ENCODE measurements at regions of chr1 and their contacts with region 1.

Region 1: GRCh38 chr1:234610348-234611152 is 572 bp upstream of the IRF2BP2 start:
- DNase-seq: peak; percentile 92
- H3K4me3 ChIP-seq: peak overlapping the region; percentile 46 to 49 (median 48)
- H3K27ac ChIP-seq: peak overlapping the region; percentile 99
- H3K4me1 ChIP-seq: peaks cover 44% of the 10 kb centered on the region
- H3K27me3 ChIP-seq: no peaks in the 10 kb centered on the region
- CTCF ChIP-seq: peak in 1 of 2 donors; percentile 24

Region 2: GRCh38 chr1:234533975-234534876 is 76.3 kb before region 1 on chr1:
- CTCF ChIA-PET with region 1: no interaction called
- dilution Hi-C with region 1: no loop called
- in situ Hi-C with region 1: no loop called
- intact Hi-C with region 1: loop called (anchors 2 kb)
- DNase-seq: peak; percentile 69
- H3K4me3 ChIP-seq: no peak overlapping the region
- H3K27ac ChIP-seq: peak overlapping the region; percentile 98
- H3K4me1 ChIP-seq: peaks cover 70% of the 10 kb centered on the region
- H3K27me3 ChIP-seq: no peaks in the 10 kb centered on the region
- CTCF ChIP-seq: no peak

Region 3: GRCh38 chr1:234550341-234551031 is 60.1 kb before region 1 on chr1:
- CTCF ChIA-PET with region 1: no interaction called
- dilution Hi-C with region 1: no loop called
- in situ Hi-C with region 1: no loop called
- intact Hi-C with region 1: no loop called
- DNase-seq: no peak
- H3K4me3 ChIP-seq: no peak overlapping the region
- H3K27ac ChIP-seq: no peak overlapping the region
- H3K4me1 ChIP-seq: no peaks in the 10 kb centered on the region
- H3K27me3 ChIP-seq: no peaks in the 10 kb centered on the region
- CTCF ChIP-seq: no peak

Region 4: DNA sequence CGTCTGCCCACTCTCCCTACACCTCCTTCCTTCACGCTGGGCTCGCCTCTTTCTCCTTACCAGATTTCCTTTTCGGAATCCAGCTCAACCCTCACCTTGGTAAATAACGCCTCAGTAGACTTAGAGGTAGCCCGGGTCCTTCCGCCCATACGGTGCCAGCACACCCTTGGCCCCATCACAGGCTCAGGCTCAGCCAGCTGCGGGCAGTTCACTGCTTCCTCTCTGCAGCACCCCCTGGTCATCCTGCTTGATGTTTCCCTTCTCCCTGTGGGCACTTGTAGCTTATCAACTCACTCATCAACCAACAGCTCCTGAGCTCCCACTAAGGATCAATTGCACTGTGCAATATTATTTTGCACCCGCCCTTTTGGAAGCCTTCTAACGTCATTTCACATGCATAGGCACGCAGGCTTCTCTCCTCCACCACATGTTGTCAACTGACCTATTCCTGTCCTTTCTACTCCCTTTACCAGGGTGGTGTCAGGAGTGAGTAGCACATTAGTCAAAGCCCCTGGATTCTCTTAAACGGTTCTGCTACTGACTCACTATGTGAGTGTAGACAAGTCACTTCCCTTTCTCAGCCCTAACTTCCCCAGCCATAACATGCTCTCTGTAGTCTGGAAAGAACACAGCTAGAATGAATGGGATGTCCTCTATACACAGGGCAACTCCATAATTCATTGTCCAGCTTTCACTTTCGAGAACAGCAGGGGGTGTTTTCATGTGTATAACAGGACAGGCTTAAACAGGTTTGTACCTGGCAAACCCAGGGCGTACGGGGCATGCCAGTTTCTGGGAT is 46.5 kb after region 1 on chr1:
- CTCF ChIA-PET with region 1: interaction called, 3 read pairs
- dilution Hi-C with region 1: loop called (anchors 5 kb)
- in situ Hi-C with region 1: loop called (anchors 5 kb)
- intact Hi-C with region 1: loop called (anchors 1 kb)
- DNase-seq: peak; percentile 100
- H3K4me3 ChIP-seq: peak overlapping the region; percentile 51 to 70 (median 61)
- H3K27ac ChIP-seq: peak overlapping the region; percentile 99
- H3K4me1 ChIP-seq: peaks cover 47% of the 10 kb centered on the region
- H3K27me3 ChIP-seq: no peaks in the 10 kb centered on the region
- CTCF ChIP-seq: peak in 1 of 2 donors; percentile 21

Region 5: GRCh38 chr1:234722904-234723720 is 112.6 kb after region 1 on chr1:
- CTCF ChIA-PET with region 1: interaction called, 8 read pairs
- dilution Hi-C with region 1: no loop called
- in situ Hi-C with region 1: loop called (anchors 5 to 10 kb)
- intact Hi-C with region 1: loop called (anchors 1 kb)
- DNase-seq: peak; percentile 94
- H3K4me3 ChIP-seq: peak overlapping the region; percentile 12 to 29 (median 19)
- H3K27ac ChIP-seq: peak overlapping the region; percentile 93
- H3K4me1 ChIP-seq: peaks cover 67% of the 10 kb centered on the region
- H3K27me3 ChIP-seq: no peaks in the 10 kb centered on the region
- CTCF ChIP-seq: no peak

Region 6: GRCh38 chr1:234763367-234763766 is 152.8 kb after region 1 on chr1:
- CTCF ChIA-PET with region 1: no interaction called
- dilution Hi-C with region 1: no loop called
- in situ Hi-C with region 1: no loop called
- intact Hi-C with region 1: no loop called
- DNase-seq: no peak
- H3K4me3 ChIP-seq: no peak overlapping the region
- H3K27ac ChIP-seq: no peak overlapping the region
- H3K4me1 ChIP-seq: no peaks in the 10 kb centered on the region
- H3K27me3 ChIP-seq: no peaks in the 10 kb centered on the region
- CTCF ChIP-seq: no peak

Region 7: GRCh38 chr1:234862944-234863515 is 252.5 kb after region 1 on chr1:
- CTCF ChIA-PET with region 1: no interaction called
- dilution Hi-C with region 1: no loop called
- in situ Hi-C with region 1: loop called in 1 of 2 experiments (anchors 25 kb)
- intact Hi-C with region 1: loop called (anchors 2 kb)
- DNase-seq: peak; percentile 69
- H3K4me3 ChIP-seq: no peak overlapping the region
- H3K27ac ChIP-seq: peak overlapping the region; percentile 35
- H3K4me1 ChIP-seq: peaks cover 42% of the 10 kb centered on the region
- H3K27me3 ChIP-seq: no peaks in the 10 kb centered on the region
- CTCF ChIP-seq: no peak

Region 8: DNA sequence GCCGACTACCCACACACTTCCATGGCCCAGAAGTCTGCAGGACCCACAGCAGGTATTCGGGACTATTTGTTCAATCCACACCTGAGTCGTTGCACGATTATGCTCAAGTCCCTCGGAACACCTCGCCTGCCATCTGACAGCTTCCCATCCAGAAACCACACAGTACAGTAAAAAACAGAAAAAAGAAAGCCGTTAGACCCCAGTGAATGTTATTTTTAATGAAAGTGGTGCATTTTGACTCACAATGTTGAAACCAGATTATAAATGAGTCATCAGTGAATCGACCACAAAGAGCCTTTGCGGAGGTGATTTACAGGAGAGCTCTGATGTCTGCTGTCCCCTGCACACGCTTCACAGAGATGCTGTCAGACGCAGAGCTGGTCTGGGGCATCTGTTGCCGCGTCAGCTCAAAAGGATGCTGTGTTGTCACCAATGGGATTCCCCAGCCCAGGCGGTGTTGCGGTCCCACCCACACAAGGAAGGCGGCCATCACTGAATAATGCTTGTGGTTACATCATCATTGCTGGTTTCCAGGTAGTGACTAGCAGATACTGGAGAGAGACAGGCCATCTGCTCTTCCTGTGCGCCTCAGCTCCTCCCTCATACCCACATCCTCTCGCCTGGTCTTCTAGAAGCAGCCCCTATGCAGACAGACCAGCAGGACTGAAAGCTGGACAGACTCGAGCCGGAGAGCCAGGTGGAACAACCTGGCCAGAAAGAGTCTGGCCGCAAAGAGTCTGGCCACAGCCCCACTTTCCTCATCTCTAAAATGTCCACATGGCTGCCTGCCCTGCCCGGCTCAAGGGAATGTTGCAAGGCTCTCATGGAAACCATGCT is 401.3 kb after region 1 on chr1:
- CTCF ChIA-PET with region 1: no interaction called
- dilution Hi-C with region 1: no loop called
- in situ Hi-C with region 1: no loop called
- intact Hi-C with region 1: loop called (anchors 1 kb)
- DNase-seq: peak; percentile 100
- H3K4me3 ChIP-seq: no peak overlapping the region
- H3K27ac ChIP-seq: peak overlapping the region; percentile 97
- H3K4me1 ChIP-seq: peaks cover 20% of the 10 kb centered on the region
- H3K27me3 ChIP-seq: no peaks in the 10 kb centered on the region
- CTCF ChIP-seq: no peak

Measured in mammary epithelial cell (primary cell).